Activated CD4-positive, alpha-beta T cell treated with anti-CD3 and anti-CD28 coated beads for 36 hours (primary cell): ENCODE measurements at regions of chr15 and their contacts with region 1.

Region 1: GRCh38 chr15:64825431-64826294 is at the start of gene PIF1:
- DNase-seq: peak; percentile 92
- ATAC-seq: peak; percentile 94
- H3K4me3 Mint-ChIP-seq: peak within 1 kb of the TSS; percentile 87
- H3K27ac Mint-ChIP-seq: peak within 1 kb of the TSS; percentile 93
- H3K4me1 Mint-ChIP-seq: peaks cover 23% of the 10 kb centered on the region
- H3K27me3 Mint-ChIP-seq: peaks cover 6% of the 10 kb centered on the region
- total RNA-seq, gene PIF1: 30.0 to 36.3 TPM

Region 2: GRCh38 chr15:64099379-64099778 is 726.3 kb before region 1 on chr15:
- CTCF ChIA-PET with region 1: no interaction called
- POLR2A ChIA-PET with region 1: no interaction called
- intact Hi-C with region 1: loop called in 1 of 2 experiments (anchors 2 kb)
- DNase-seq: no peak
- ATAC-seq: no peak
- H3K4me3 Mint-ChIP-seq: no peak overlapping the region
- H3K27ac Mint-ChIP-seq: peak overlapping the region; percentile 31
- H3K4me1 Mint-ChIP-seq: peaks cover 58% of the 10 kb centered on the region
- H3K27me3 Mint-ChIP-seq: no peaks in the 10 kb centered on the region

Region 3: DNA sequence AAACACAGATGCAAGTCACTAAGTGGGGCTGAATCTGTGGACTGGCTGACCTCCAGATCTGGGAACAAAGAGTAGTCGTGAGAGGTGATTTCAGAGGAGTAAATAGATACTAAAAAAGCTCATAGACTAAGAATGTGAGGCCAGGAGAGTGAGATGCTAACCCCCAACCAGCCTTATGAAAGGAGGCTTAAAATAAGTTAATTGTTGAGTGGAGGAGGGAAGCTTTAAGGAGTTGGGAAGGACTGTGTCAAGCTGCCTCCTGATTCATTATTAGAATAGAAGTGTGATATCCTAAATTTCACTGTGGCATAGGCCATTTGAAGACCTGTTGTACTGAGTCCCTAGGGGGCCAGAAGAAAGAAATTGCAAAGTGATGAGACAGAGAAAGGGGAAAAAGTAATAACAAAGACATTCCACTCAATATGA is 157.9 kb before region 1 on chr15:
- CTCF ChIA-PET with region 1: no interaction called
- POLR2A ChIA-PET with region 1: no interaction called
- intact Hi-C with region 1: no loop called
- DNase-seq: no peak
- ATAC-seq: no peak
- H3K4me3 Mint-ChIP-seq: no peak overlapping the region
- H3K27ac Mint-ChIP-seq: no peak overlapping the region
- H3K4me1 Mint-ChIP-seq: peaks cover 5% of the 10 kb centered on the region
- H3K27me3 Mint-ChIP-seq: no peaks in the 10 kb centered on the region

Region 4: GRCh38 chr15:64809649-64810496 is 15.8 kb before region 1 on chr15:
- CTCF ChIA-PET with region 1: interaction called, 54 read pairs
- POLR2A ChIA-PET with region 1: no interaction called
- intact Hi-C with region 1: no loop called
- DNase-seq: peak; percentile 86
- ATAC-seq: peak; percentile 86
- H3K4me3 Mint-ChIP-seq: no peak overlapping the region
- H3K27ac Mint-ChIP-seq: no peak overlapping the region
- H3K4me1 Mint-ChIP-seq: no peaks in the 10 kb centered on the region
- H3K27me3 Mint-ChIP-seq: peaks cover 3% of the 10 kb centered on the region

Region 5: GRCh38 chr15:64841258-64842095 is 15.8 kb after region 1 on chr15 and contains the start of gene PLEKHO2:
- CTCF ChIA-PET with region 1: interaction called, 11 read pairs
- POLR2A ChIA-PET with region 1: interaction called, 4 read pairs
- intact Hi-C with region 1: loop called in 1 of 2 experiments (anchors 1 kb)
- DNase-seq: peak; percentile 94
- ATAC-seq: peak; percentile 73
- H3K4me3 Mint-ChIP-seq: peak within 1 kb of the TSS; percentile 88
- H3K27ac Mint-ChIP-seq: peak within 1 kb of the TSS; percentile 84
- H3K4me1 Mint-ChIP-seq: peaks cover 66% of the 10 kb centered on the region
- H3K27me3 Mint-ChIP-seq: no peaks in the 10 kb centered on the region
- total RNA-seq, gene PLEKHO2: 11.4 to 13.3 TPM

Region 6: GRCh38 chr15:64989416-64990167 is 163.9 kb after region 1 on chr15 and contains the start of gene SPG21:
- CTCF ChIA-PET with region 1: no interaction called
- POLR2A ChIA-PET with region 1: no interaction called
- intact Hi-C with region 1: loop called in 1 of 2 experiments (anchors 1 kb)
- DNase-seq: peak; percentile 94
- ATAC-seq: peak; percentile 96
- H3K4me3 Mint-ChIP-seq: peak within 1 kb of the TSS; percentile 96
- H3K27ac Mint-ChIP-seq: peak within 1 kb of the TSS; percentile 88
- H3K4me1 Mint-ChIP-seq: peaks cover 37% of the 10 kb centered on the region
- H3K27me3 Mint-ChIP-seq: no peaks in the 10 kb centered on the region
- total RNA-seq, gene SPG21: 74.1 to 79.1 TPM